A673 (cell line): ENCODE measurements at regions of chr4 and their contacts with region 1.

Region 1: GRCh38 chr4:77120886-77121508 is 36.0 kb upstream of the CCNG2 start:
- DNase-seq: no peak
- H3K4me3 ChIP-seq: no peak overlapping the region
- H3K27ac ChIP-seq: no peak overlapping the region
- H3K4me1 ChIP-seq: no peaks in the 10 kb centered on the region
- H3K27me3 ChIP-seq: no peaks in the 10 kb centered on the region
- CTCF ChIP-seq: no peak

Region 2: GRCh38 chr4:77849278-77849965 is 728.4 kb after region 1 on chr4:
- CTCF ChIA-PET with region 1: interaction called, 11 read pairs
- POLR2A ChIA-PET with region 1: no interaction called
- intact Hi-C with region 1: no loop called
- DNase-seq: no peak
- H3K4me3 ChIP-seq: no peak overlapping the region
- H3K27ac ChIP-seq: no peak overlapping the region
- H3K4me1 ChIP-seq: no peaks in the 10 kb centered on the region
- H3K27me3 ChIP-seq: no peaks in the 10 kb centered on the region
- CTCF ChIP-seq: no peak